Uterus (tissue), 4 donors: ENCODE measurements at regions of chr10 and their contacts with region 1.

Region 1: DNA sequence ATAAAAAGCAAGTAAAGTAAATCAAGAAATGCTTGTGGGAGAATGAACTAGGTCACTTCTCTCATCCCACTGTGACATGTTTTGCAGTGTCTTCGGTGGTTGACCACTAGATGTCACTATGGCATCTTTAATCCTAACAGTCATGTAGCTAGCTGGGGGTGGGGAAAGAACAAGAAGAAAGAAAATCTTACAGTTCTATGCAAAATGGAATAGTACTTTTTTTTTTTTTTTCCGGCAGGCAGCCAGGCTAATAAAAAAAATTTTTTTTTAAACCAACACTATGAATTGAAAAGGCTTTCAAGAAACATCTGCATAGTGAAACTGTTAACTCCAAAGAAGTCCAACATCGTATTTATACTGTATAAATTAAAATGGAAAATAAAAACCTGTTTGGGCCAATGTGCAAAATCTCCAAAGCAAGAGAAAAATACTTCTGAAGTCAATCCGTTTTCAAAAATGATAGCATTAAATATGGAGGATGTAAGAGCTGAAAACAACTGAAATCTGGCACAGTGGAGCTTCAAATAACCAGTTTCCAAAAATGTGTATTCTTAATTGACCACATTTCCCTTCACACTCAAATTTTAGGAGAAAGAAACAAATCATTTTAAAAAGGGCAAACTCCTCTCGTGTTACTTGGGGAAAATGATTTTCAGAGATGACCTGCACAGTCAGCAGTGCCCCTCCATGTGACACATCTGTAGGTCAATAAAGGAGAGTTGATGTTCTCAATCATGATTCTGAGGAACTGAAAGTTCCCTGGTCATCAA is 38.5 kb downstream of the CDK1 start:
- DNase-seq: peak; percentile 49 to 79
- H3K4me3 ChIP-seq: no peak overlapping the region
- H3K27ac ChIP-seq: peak overlapping the region; percentile 69 to 72
- H3K4me1 ChIP-seq: peaks cover 0 to 19% of the 10 kb centered on the region in 2 donors
- H3K27me3 ChIP-seq: no peaks in the 10 kb centered on the region
- CTCF ChIP-seq: peak; percentile 76 to 90 (median 85)
- POLR2A ChIP-seq: no peak

Region 2: DNA sequence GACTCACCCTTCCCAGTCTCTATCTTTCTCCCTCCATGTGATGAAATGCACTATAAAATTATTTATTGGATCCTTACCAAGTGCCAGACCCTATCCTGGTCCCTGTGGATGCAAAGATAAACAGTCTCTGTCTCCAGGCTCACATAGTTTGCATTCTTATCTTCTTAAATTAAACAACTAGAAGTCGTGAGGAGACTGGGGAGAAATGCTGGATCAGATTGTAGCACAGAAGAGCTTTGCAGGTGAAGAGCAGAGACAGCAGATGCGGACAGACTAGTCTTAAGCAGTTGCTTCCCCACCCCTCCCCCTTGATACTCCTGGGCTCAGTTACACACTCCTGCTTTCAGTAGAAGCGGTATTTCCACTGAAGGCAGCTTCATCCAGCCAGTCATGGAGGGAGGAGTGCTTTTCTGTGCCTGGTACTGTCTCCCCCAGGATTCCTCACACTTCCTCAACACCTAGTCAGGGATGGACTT is 59.4 kb before region 1 on chr10:
- intact Hi-C with region 1: no loop called
- DNase-seq: no peak
- H3K4me3 ChIP-seq: no peak overlapping the region
- H3K27ac ChIP-seq: no peak overlapping the region
- H3K4me1 ChIP-seq: no peaks in the 10 kb centered on the region
- H3K27me3 ChIP-seq: no peaks in the 10 kb centered on the region
- CTCF ChIP-seq: no peak
- POLR2A ChIP-seq: no peak

Region 3: GRCh38 chr10:60784641-60785040 is 32.2 kb before region 1 on chr10:
- intact Hi-C with region 1: no loop called
- DNase-seq: no peak
- H3K4me3 ChIP-seq: no peak overlapping the region
- H3K27ac ChIP-seq: no peak overlapping the region
- H3K4me1 ChIP-seq: no peaks in the 10 kb centered on the region
- H3K27me3 ChIP-seq: no peaks in the 10 kb centered on the region
- CTCF ChIP-seq: no peak
- POLR2A ChIP-seq: no peak

Region 4: GRCh38 chr10:60964257-60965235 is 147.7 kb after region 1 on chr10:
- intact Hi-C with region 1: loop called (anchors 5 kb)
- DNase-seq: peak; percentile 68 to 83
- H3K4me3 ChIP-seq: no peak overlapping the region
- H3K27ac ChIP-seq: peak overlapping the region; percentile 68 to 77
- H3K4me1 ChIP-seq: peaks cover 0 to 13% of the 10 kb centered on the region in 2 donors
- H3K27me3 ChIP-seq: no peaks in the 10 kb centered on the region
- CTCF ChIP-seq: peak; percentile 78 to 84 (median 80)
- POLR2A ChIP-seq: no peak